Calu3 (cell line): ENCODE measurements at regions of chr10 and their contacts with region 1.

Region 1: GRCh38 chr10:27801171-27801785 is 55.7 kb upstream of the MKX start:
- DNase-seq: peak; percentile 53
- H3K4me3 Mint-ChIP-seq: no peak overlapping the region
- H3K27ac Mint-ChIP-seq: no peak overlapping the region
- H3K4me1 Mint-ChIP-seq: peaks cover 9% of the 10 kb centered on the region
- H3K27me3 Mint-ChIP-seq: peaks cover 16% of the 10 kb centered on the region
- CTCF ChIP-seq: no peak

Region 2: DNA sequence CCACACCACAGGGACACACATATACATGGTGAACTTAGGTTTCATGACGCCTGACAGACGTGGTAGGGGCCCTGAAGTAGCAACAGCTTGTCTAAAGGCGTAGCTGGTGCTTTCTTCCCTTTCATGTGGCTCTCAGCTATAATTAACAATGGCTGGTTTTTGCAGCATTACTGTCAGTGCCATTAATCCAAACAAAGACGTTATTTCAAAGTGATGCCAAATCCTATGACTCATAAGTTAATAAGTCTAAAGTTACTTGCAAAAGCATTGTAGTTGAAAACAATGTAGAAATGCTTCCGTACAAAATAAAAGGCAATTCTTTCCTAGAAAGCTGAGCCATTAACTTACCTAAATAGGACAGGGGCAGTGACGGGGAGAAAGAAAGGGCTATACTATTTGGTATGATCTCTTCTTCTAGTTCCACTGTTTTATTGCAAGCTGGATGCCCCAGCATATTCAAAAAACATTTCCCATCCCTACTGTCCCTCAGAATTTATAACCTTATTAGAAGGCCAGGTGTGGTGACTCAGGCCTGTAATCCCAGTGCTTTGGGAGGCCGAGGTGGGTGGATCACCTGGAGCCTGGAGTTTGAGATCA is 92.2 kb after region 1 on chr10:
- CTCF ChIA-PET with region 1: no interaction called
- intact Hi-C with region 1: loop called (anchors 5 kb)
- DNase-seq: peak; percentile 44
- H3K4me3 Mint-ChIP-seq: no peak overlapping the region
- H3K27ac Mint-ChIP-seq: no peak overlapping the region
- H3K4me1 Mint-ChIP-seq: peaks cover 19% of the 10 kb centered on the region
- H3K27me3 Mint-ChIP-seq: no peaks in the 10 kb centered on the region
- CTCF ChIP-seq: no peak